Caco-2 (cell line): ENCODE measurements at regions of chr10 and their contacts with region 1.

Region 1: DNA sequence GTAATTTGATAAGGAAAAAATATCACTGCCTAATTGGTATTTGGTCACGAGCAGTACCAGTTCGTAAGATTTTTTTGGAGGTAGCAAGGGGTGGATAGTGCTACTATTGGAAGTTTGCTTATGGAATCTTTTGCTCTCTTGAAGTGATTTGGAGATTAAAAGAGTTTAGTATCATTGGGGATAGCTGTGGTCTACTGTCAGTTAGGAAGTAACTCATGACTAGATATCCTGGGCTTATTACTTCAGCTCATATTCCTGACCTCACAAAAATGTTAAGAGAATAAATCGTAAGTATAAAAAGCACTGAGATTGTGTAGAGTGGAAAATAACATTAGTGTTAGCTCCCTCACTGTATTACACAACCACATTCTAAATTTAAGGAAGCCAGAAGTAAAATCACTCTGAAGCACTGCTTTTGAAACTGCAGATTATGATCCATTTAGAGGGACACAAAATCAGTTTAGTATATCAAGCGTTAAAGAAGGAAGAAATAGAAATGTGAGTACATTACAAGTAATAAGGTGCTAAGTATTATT is 22.6 kb downstream of the SGPL1 start:
- DNase-seq: no peak
- H3K4me3 ChIP-seq: no peak overlapping the region
- H3K4me3 Mint-ChIP-seq: no peak overlapping the region
- H3K27ac Mint-ChIP-seq: no peak overlapping the region
- H3K4me1 ChIP-seq: peaks cover 21% of the 10 kb centered on the region
- H3K4me1 Mint-ChIP-seq: peaks cover 34% of the 10 kb centered on the region
- H3K27me3 ChIP-seq: no peaks in the 10 kb centered on the region
- H3K27me3 Mint-ChIP-seq: no peaks in the 10 kb centered on the region
- CTCF ChIP-seq: no peak

Region 2: DNA sequence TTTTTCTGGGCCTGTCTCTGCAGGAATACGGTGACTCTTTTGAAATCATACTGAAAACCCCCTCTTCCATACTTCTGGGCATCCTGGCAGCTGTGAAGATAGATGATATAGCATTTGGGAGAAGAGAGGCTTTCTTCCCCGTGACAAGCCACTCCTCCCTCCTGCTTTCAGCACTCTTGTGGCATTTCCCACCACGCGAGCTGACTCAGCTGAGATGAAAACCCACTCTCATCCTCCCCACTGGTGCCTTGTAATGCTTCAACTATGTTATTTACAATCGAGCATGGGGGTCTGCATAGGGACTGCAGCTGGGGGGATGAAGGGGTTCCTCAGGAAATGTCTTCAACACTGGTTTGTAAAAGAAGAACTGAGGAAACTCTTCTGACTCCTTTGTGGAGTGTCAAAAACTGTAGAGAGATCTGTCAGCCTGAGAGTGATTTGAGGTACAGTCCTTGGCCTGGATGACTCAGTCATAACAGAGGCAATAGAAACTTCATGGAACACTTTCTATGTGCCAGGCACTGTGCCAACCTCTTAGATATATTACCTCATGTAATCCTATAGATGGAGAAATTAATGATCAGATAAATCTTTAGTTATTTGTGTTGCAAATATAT is 51.4 kb before region 1 on chr10:
- CTCF ChIA-PET with region 1: no interaction called
- POLR2A ChIA-PET with region 1: no interaction called
- intact Hi-C with region 1: loop called (anchors 1 kb)
- DNase-seq: no peak
- H3K4me3 ChIP-seq: no peak overlapping the region
- H3K4me3 Mint-ChIP-seq: no peak overlapping the region
- H3K27ac Mint-ChIP-seq: no peak overlapping the region
- H3K4me1 ChIP-seq: no peaks in the 10 kb centered on the region
- H3K4me1 Mint-ChIP-seq: peaks cover 6% of the 10 kb centered on the region
- H3K27me3 ChIP-seq: 0 out of 2 replicates have a peak, but pooled peaks cover 3% of the 10 kb centered on the region
- H3K27me3 Mint-ChIP-seq: peaks cover 20% of the 10 kb centered on the region
- CTCF ChIP-seq: no peak

Region 3: DNA sequence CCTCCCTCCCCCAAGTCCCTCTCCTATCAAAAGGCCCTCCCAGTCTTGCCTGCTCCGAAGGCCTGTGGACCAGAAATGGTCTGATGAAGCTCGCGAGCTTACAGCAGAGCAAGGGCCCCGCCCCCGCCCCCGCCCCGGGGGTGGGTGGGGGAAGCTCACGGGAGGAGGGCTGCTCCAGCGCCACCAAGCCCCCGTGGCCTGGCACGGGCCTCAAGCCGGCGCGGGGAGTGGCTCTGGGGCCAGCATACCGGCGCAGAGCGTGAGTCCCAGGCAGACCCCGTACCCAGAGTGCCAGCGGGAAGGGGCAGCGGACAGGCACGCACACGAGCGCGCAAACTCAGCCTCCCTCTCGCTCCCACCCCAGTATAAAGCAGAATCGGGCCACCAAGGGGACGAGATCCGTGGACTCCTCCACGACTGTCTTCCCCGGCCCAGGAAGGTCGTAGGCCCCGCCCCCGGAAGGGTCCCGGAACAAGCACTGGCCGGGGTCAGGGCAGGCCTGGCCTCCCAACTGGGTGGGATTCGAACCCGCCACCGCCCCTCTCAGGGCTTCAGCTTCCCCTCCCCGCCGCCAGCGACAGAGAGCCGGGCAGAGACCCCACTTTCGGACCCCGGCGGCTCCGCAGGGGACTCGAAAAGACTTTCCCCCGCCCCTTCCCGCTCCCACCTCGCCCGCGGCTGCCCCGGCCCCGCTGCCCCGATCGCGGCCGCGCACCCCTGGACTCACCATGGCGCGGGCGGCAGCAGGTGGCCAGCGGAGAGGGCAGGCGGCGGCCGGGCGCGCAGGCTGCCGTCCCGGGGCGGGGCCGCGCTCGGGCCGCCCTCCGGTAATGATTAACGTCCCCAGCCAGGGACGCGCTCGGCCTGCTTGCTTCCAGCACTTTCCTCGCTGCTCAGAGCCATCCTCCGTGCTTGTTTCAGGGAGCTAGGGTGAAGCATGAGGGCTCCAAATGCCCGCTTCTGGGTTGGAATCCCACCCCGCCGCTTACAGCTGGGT is 49.8 kb after region 1 on chr10 and contains the start of gene PCBD1:
- CTCF ChIA-PET with region 1: no interaction called
- POLR2A ChIA-PET with region 1: no interaction called
- intact Hi-C with region 1: no loop called
- DNase-seq: peak; percentile 90 to 97
- H3K4me3 ChIP-seq: peak within 1 kb of the TSS; percentile 98
- H3K4me3 Mint-ChIP-seq: peak within 1 kb of the TSS; percentile 83
- H3K27ac Mint-ChIP-seq: peak within 1 kb of the TSS; percentile 67
- H3K4me1 ChIP-seq: peaks cover 14% of the 10 kb centered on the region
- H3K4me1 Mint-ChIP-seq: peaks cover 22% of the 10 kb centered on the region
- H3K27me3 ChIP-seq: no peaks in the 10 kb centered on the region
- H3K27me3 Mint-ChIP-seq: no peaks in the 10 kb centered on the region
- CTCF ChIP-seq: no peak
- total RNA-seq, gene PCBD1: 249 and 252 TPM in 2 replicates